Activated B cell treated with CpG ODN at 0.5 μM for 24 hours (primary cell): ENCODE measurements at regions of chr6 and their contacts with region 1.

Region 1: DNA sequence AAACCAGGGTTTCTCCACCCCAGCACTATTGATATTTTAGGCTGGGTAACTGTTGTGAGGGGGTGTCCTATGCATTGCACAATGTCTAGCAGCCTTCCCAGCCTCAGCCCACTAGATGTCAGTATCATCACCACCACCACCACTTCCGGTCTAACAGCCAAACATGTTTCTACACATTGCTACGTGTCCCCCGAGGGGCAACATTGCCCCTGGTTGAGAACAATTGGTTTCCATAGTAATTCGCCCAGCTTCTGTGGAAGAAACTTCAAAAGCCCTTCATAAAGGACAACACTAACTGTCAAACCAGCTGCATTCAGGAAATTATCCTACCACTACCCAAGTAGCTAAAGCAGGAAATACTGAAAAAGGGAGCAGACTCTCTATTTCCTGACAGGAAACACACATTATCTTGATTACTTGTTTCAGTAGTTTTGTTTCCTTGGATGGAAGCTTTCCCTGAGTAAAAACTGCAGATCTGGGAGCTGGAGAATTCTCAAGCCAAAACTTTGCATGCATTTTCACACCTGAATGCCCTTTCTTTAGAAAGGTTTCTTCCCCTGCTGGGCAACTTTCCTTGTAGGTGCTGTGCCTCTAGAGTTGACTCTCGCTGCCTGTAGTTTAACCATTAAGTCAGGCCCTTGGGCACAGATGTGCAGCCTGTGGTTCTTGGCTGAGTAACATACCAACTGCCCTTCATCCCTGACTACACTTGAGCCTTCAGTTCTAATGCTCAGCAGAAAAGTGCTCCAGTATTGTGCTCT is 23.6 kb downstream of the PKHD1 start:
- DNase-seq: peak; percentile 18
- ATAC-seq: peak; percentile 99
- H3K4me3 Mint-ChIP-seq: peak overlapping the region; percentile 77
- H3K27ac Mint-ChIP-seq: peak overlapping the region; percentile 25
- H3K4me1 Mint-ChIP-seq: peaks cover 7% of the 10 kb centered on the region
- H3K27me3 Mint-ChIP-seq: no peaks in the 10 kb centered on the region
- CTCF ChIP-seq: no peak

Region 2: GRCh38 chr6:51926125-51926524 is 137.6 kb before region 1 on chr6:
- CTCF ChIA-PET with region 1: no interaction called
- POLR2A ChIA-PET with region 1: no interaction called
- intact Hi-C with region 1: no loop called
- DNase-seq: no peak
- ATAC-seq: no peak
- H3K4me3 Mint-ChIP-seq: no peak overlapping the region
- H3K27ac Mint-ChIP-seq: no peak overlapping the region
- H3K4me1 Mint-ChIP-seq: no peaks in the 10 kb centered on the region
- H3K27me3 Mint-ChIP-seq: peaks cover 4% of the 10 kb centered on the region
- CTCF ChIP-seq: no peak

Region 3: DNA sequence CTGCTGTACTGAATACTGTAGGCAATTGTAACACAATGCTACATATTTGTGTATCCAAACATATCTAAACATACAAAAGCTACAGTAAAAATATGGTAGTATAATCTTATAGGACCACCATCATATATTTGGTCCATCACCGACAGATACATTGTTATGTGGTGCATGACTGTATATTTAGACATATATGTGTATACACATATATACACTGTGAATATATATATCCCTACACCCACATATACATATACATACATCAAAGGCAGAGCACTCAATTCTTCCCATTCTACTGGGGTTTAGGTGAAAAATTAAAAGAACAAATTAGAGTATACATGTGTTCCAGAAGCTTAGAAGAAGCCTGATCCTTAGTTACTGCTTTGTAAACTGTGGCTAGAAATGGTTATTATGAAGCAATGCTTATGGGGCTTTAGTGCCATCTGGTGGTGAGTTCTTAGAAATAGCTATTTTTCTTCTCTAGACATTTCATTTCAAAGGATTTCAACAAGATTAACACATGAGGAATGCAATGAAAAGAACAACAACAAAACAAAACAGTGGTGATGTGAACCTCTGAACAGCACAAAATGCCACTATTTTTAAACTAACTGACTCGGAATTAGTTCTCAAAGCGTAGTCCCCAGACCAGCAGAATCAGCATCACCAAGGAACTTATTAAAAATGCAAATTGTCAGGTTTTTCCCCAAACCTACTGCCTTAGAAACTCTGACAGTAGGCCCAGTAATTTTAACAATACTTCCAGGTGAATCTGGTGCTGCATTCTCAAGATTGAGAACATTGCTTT is 14.3 kb before region 1 on chr6:
- CTCF ChIA-PET with region 1: interaction called, 10 read pairs
- POLR2A ChIA-PET with region 1: no interaction called
- intact Hi-C with region 1: no loop called
- DNase-seq: no peak
- ATAC-seq: no peak
- H3K4me3 Mint-ChIP-seq: no peak overlapping the region
- H3K27ac Mint-ChIP-seq: no peak overlapping the region
- H3K4me1 Mint-ChIP-seq: no peaks in the 10 kb centered on the region
- H3K27me3 Mint-ChIP-seq: peaks cover 14% of the 10 kb centered on the region
- CTCF ChIP-seq: no peak